Activated B cell treated with CpG ODN at 0.5 μM for 24 hours (primary cell): ENCODE measurements at regions of chr16 and their contacts with region 1.

Region 1: DNA sequence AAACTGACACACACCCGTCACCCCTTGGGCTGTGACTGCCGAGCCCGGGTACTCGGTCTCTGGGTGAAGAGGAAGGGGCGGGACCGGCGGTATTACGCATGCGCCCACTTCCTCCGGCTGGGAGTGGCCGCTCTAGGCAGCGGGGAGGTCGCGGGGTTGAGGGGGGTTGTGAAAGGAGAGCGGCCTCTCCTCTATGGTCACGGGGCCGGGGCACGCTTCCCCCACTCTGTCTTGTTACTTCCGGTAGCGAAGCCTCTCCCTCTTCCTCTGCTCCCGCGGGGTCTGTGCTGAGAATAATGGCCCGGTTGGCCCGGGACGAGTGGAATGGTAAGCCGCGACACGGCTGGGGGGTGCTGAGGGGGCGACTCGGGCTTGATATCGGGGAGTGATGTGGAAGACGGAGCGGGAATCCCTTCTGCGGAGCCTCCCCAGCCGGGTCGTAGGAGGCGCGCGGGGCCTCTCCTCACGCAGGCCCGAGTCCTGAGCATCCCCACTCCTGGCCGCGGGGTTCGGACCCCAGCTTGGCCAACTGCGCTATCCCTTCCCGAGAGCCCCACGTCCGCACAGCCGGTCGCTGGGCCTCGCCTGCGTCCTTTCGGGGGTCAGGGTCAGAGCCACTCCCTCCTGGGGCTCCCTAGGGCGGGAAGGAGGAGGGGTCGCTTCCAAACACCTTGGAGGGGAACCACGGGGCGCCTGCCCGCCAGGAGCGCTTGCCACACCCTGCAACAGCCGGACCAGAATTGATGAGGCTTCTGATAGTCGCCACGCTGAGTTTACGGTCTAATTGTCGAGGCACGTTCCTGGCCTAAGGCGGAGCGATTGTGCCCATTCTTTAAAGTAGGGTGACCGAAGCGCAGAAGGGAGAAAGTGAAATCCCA is at the start of gene BFAR:
- DNase-seq: peak; percentile 99
- ATAC-seq: peak; percentile 77
- H3K4me3 Mint-ChIP-seq: peak within 1 kb of the TSS; percentile 100
- H3K27ac Mint-ChIP-seq: peak within 1 kb of the TSS; percentile 97
- H3K4me1 Mint-ChIP-seq: peaks cover 64% of the 10 kb centered on the region
- H3K27me3 Mint-ChIP-seq: no peaks in the 10 kb centered on the region
- CTCF ChIP-seq: no peak
- total RNA-seq, gene BFAR: 54.9 and 68.2 TPM in 2 replicates

Region 2: DNA sequence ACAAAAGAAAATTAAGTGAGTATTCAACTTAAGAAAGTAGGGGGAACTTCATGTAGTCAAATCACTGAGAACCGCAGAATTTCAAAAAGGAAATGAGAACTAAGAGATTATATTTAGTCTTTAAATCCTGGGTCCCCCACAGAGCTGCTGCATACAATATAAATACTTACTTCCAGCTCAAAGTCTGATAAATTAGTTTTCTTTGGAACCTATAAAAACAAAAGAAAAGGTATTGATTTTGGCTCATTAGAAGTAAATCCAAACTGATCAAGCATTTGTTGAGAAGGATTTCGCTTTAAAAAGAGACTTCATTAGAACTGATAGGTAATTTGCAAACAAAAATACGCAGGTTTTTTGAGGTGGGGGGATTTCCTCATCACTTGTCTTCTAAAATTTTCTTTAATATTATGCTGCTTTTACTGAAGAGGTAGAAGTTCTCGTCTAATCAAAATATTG is 24.8 kb before region 1 on chr16:
- CTCF ChIA-PET with region 1: interaction called, 3 read pairs
- POLR2A ChIA-PET with region 1: interaction called, 12 read pairs
- intact Hi-C with region 1: loop called (anchors 1 kb)
- DNase-seq: no peak
- ATAC-seq: peak; percentile 70
- H3K4me3 Mint-ChIP-seq: peak overlapping the region; percentile 67
- H3K27ac Mint-ChIP-seq: peak overlapping the region; percentile 77
- H3K4me1 Mint-ChIP-seq: peaks cover 44% of the 10 kb centered on the region
- H3K27me3 Mint-ChIP-seq: no peaks in the 10 kb centered on the region
- CTCF ChIP-seq: no peak

Region 3: DNA sequence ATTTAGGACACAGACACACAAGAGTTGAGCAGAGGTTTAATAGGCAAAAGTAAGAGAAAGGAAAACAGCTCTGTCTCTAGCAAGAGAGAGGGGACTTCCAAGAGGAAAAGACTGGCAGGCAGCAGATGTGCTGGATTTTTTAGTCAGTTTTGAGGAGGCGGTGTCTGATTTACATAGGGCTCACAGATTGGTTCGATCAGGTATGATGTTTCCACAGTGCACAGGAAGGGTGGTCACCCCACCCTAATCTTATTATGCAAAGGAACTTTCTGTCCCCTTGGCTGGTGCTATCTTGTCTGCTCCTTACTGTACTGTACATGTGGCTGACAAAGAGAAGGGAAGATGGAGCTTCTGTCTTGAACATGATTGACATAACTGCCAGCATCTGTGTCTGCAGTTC is 25.1 kb after region 1 on chr16:
- CTCF ChIA-PET with region 1: no interaction called
- POLR2A ChIA-PET with region 1: interaction called, 4 read pairs
- intact Hi-C with region 1: loop called (anchors 2 kb)
- DNase-seq: no peak
- ATAC-seq: peak; percentile 94
- H3K4me3 Mint-ChIP-seq: peak overlapping the region; percentile 24
- H3K27ac Mint-ChIP-seq: peak overlapping the region; percentile 79
- H3K4me1 Mint-ChIP-seq: peaks cover 10% of the 10 kb centered on the region
- H3K27me3 Mint-ChIP-seq: no peaks in the 10 kb centered on the region
- CTCF ChIP-seq: no peak

Region 4: GRCh38 chr16:15041271-15042004 is 408.5 kb after region 1 on chr16:
- CTCF ChIA-PET with region 1: no interaction called
- POLR2A ChIA-PET with region 1: no interaction called
- intact Hi-C with region 1: no loop called
- DNase-seq: no peak
- ATAC-seq: no peak
- H3K4me3 Mint-ChIP-seq: no peak overlapping the region
- H3K27ac Mint-ChIP-seq: peak overlapping the region; percentile 24
- H3K4me1 Mint-ChIP-seq: no peaks in the 10 kb centered on the region
- H3K27me3 Mint-ChIP-seq: no peaks in the 10 kb centered on the region
- CTCF ChIP-seq: no peak